ENCODE measurements at regions of chr6 and their contacts with region 1.

Region 1: GRCh38 chr6:42043787-42044475 is 6.4 kb upstream of the TAF8 start:
- DNase-seq: peak; percentile 58 to 89
- H3K4me3 ChIP-seq: peak overlapping the region; percentile 5 to 6
- H3K27ac ChIP-seq: peak overlapping the region in 1 of 2 donors; percentile 95
- H3K4me1 ChIP-seq: peaks cover 17 to 29% of the 10 kb centered on the region in 2 donors
- H3K27me3 ChIP-seq: no peaks in the 10 kb centered on the region
- CTCF ChIP-seq: peak; percentile 89 to 95 (median 92)

Region 2: DNA sequence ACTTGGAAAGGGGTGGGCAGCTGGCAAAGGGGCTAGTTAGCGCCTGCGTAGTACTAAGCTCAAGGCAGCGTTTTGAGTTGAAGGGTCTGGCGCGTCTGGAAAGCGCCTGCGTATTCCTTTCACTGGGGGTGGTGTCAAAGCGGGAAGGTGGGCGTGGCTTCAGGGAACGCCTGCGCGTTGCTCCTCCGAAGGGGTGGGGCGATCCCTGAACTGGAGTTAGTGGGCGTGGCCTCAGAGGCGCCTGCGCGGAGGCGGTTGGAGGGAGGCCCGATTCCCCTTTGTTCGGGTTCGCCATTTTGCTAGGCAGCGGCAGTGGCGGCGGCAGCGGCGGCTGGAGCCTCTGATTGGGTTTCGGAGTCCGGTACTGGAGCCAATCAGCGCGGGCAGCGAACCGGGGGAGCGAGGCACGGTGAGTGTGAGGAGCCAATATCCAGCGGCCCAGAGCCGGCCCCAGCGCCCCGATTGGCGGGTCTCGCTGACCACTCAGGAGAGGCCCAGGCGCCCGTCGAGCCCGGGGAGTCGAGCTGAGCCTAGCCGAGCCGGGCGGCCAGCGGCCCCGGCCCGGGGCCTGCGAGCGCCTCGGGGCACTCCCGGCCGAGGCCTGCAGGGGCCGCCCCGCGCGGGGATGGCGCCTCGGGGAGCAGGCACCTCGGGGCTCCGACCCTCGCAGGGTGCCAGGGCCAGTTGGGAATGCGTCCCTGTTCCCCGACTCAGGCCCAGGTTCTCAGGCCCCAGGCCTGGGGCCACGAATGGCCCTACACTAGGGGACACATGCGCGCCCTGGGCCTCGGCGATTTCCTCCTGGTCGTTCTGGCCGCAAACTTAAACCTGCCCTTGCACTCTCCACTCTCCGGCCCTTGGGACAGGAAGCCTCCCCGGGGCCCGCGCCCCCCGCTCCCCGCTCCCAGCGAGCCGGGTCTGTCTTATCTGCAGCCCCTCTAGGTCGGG is 971.0 kb before region 1 on chr6 and contains the start of gene NFYA:
- intact Hi-C with region 1: loop called (anchors 5 kb)
- DNase-seq: peak; percentile 98 to 100
- H3K4me3 ChIP-seq: peak within 1 kb of the TSS; percentile 80 to 86
- H3K27ac ChIP-seq: peak within 1 kb of the TSS; percentile 98 to 100
- H3K4me1 ChIP-seq: peaks cover 10 to 27% of the 10 kb centered on the region in 2 donors
- H3K27me3 ChIP-seq: no peaks in the 10 kb centered on the region
- CTCF ChIP-seq: peak; percentile 19 to 62 (median 25)
- total RNA-seq, gene NFYA: 10.4 TPM

Region 3: GRCh38 chr6:41779793-41780545 is 264.0 kb before region 1 on chr6 and contains the start of gene FRS3:
- intact Hi-C with region 1: loop called (anchors 1 kb)
- DNase-seq: peak; percentile 88 to 98
- H3K4me3 ChIP-seq: peak within 1 kb of the TSS; percentile 71 to 95
- H3K27ac ChIP-seq: peak within 1 kb of the TSS; percentile 72 to 88
- H3K4me1 ChIP-seq: peaks cover 6 to 14% of the 10 kb centered on the region in 2 donors
- H3K27me3 ChIP-seq: no peaks in the 10 kb centered on the region
- CTCF ChIP-seq: peak; percentile 92 to 97 (median 93)
- total RNA-seq, gene FRS3: 26.0 TPM

Region 4: GRCh38 chr6:41920921-41921711 is 122.8 kb before region 1 on chr6 and contains the starts of genes BYSL and MED20:
- intact Hi-C with region 1: loop called (anchors 2 kb)
- DNase-seq: peak; percentile 69 to 95
- H3K4me3 ChIP-seq: peak within 1 kb of the TSS; percentile 92 to 97
- H3K27ac ChIP-seq: peak within 1 kb of the TSS; percentile 98 to 99
- H3K4me1 ChIP-seq: peaks cover 8 to 19% of the 10 kb centered on the region in 2 donors
- H3K27me3 ChIP-seq: no peaks in the 10 kb centered on the region
- CTCF ChIP-seq: peak; percentile 94 to 97 (median 96)
- total RNA-seq, gene BYSL: 1.6 TPM
- total RNA-seq, gene MED20: 13.5 TPM

Region 5: GRCh38 chr6:41970436-41970846 is 73.5 kb before region 1 on chr6:
- intact Hi-C with region 1: no loop called
- DNase-seq: peak in 1 of 2 donors; percentile 28
- H3K4me3 ChIP-seq: no peak overlapping the region
- H3K27ac ChIP-seq: no peak overlapping the region
- H3K4me1 ChIP-seq: no peaks in the 10 kb centered on the region
- H3K27me3 ChIP-seq: no peaks in the 10 kb centered on the region
- CTCF ChIP-seq: no peak

Region 6: GRCh38 chr6:43174263-43175112 is 1130.6 kb after region 1 on chr6:
- intact Hi-C with region 1: loop called (anchors 10 kb)
- DNase-seq: peak; percentile 98 to 99
- H3K4me3 ChIP-seq: peak overlapping the region; percentile 88 to 95
- H3K27ac ChIP-seq: peak overlapping the region; percentile 98
- H3K4me1 ChIP-seq: peaks cover 8 to 30% of the 10 kb centered on the region in 2 donors
- H3K27me3 ChIP-seq: no peaks in the 10 kb centered on the region
- CTCF ChIP-seq: peak in 1 of 3 experiments; percentile 16